ENCODE measurements at regions of chr19 and their contacts with region 1.

Region 1: GRCh38 chr19:13093407-13094105 is 9.1 kb downstream of the LYL1 start:
- DNase-seq: peak; percentile 86
- H3K4me3 ChIP-seq: no peak overlapping the region
- H3K27ac ChIP-seq: no peak overlapping the region
- H3K4me1 ChIP-seq: peaks cover 32% of the 10 kb centered on the region
- H3K27me3 ChIP-seq: no peaks in the 10 kb centered on the region
- CTCF ChIP-seq: peak; percentile 87 to 90
- POLR2A ChIP-seq: no peak

Region 2: DNA sequence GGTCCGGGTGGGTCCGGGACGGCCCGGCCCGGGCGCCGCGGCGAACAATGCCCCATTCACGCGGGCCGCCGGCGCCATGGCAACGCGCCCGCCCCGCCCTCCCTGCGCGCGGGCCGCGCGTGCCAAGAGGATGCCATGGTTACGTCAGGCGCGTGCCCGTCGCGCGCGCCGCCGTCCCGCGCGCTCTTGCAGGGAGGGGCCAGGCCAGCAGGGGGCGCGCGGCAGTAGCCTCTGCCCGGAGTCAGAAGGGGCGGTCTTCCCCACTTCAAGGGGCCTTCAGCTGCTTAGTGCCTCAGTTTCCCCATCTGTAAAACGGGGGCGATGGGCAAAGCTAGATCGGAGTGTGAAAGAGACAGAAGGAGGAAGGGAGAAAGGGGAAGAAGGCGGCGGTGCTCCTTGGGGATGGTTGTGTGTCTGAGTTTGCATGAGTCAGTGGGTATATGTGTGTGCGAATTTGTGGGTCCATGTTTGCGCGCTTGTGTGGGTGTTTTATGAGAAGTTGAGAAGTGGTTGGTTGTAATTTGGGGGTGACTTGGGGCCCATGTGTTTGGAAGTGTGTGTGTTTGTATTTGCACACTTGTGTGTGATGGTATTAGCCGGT is 109.9 kb before region 1 on chr19:
- CTCF ChIA-PET with region 1: interaction called, 543 read pairs
- POLR2A ChIA-PET with region 1: no interaction called
- dilution Hi-C with region 1: no loop called
- intact Hi-C with region 1: loop called (anchors 1 kb)
- DNase-seq: peak; percentile 83
- H3K4me3 ChIP-seq: peak overlapping the region in 2 of 3 experiments; percentile 23 to 35
- H3K27ac ChIP-seq: no peak overlapping the region
- H3K4me1 ChIP-seq: peaks cover 2% of the 10 kb centered on the region
- H3K27me3 ChIP-seq: no peaks in the 10 kb centered on the region
- CTCF ChIP-seq: peak; percentile 91 to 92
- POLR2A ChIP-seq: no peak

Region 3: GRCh38 chr19:13033819-13034611 is 59.5 kb before region 1 on chr19:
- CTCF ChIA-PET with region 1: interaction called, 114 read pairs
- POLR2A ChIA-PET with region 1: interaction called, 4 read pairs
- dilution Hi-C with region 1: no loop called
- intact Hi-C with region 1: loop called (anchors 5 kb)
- DNase-seq: no peak
- H3K4me3 ChIP-seq: no peak overlapping the region
- H3K27ac ChIP-seq: no peak overlapping the region
- H3K4me1 ChIP-seq: peaks cover 15% of the 10 kb centered on the region
- H3K27me3 ChIP-seq: no peaks in the 10 kb centered on the region
- CTCF ChIP-seq: peak; percentile 77 to 86
- POLR2A ChIP-seq: no peak

Region 4: DNA sequence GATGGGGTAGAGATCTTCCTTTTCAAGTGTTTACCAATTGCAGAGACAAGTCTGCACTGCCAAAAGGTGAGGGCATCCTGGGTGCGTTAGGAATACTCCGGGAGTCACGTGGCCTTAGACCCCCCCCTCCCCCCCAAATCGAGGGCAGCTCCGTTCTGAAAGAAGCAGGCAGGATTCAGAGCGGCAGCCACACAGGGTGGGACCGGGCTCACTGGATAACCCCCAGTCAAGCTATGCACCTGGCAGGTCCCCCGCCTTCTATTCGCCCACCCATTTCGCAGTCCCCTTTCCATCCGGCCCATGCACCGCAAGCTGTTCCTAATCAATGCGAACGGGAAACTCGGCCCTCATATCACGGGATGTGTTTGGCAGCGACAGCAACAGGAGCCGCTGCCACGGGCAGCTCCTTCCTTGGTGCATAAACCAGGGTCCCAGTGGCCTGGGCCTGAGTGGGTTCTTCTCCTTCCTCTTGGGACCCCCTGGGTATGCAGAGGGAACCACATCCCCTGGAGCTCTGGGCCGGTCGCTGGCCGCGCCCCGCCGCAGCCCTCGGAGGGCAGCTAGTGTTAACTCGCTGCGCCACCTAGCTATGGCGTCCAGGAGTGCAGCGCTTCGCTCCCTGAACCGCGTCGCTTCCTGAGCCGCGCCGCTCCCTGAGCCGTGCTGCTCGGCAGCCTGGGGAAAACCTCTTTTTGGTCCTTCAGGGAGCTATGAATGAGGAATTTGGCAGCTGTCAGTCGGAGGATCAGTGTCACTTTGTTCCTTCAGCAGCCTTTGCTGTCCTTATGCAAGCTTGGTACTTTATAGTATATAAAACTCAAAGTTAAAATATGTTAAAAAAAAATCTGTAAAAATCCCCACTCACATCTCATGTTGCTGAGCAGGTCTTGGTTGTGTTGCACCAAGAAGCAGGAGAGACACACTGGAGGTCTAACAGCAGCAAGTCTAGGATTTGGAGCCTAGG is 32.3 kb before region 1 on chr19:
- CTCF ChIA-PET with region 1: interaction called, 65 read pairs
- POLR2A ChIA-PET with region 1: interaction called, 3 read pairs
- dilution Hi-C with region 1: no loop called
- intact Hi-C with region 1: loop called (anchors 1 kb)
- DNase-seq: peak; percentile 79
- H3K4me3 ChIP-seq: peak overlapping the region; percentile 23 to 43 (median 33)
- H3K27ac ChIP-seq: no peak overlapping the region
- H3K4me1 ChIP-seq: peaks cover 24% of the 10 kb centered on the region
- H3K27me3 ChIP-seq: no peaks in the 10 kb centered on the region
- CTCF ChIP-seq: peak; percentile 98
- POLR2A ChIP-seq: no peak

Region 5: GRCh38 chr19:13082192-13083007 is 11.2 kb before region 1 on chr19:
- CTCF ChIA-PET with region 1: interaction called, 21 read pairs
- POLR2A ChIA-PET with region 1: no interaction called
- dilution Hi-C with region 1: no loop called
- intact Hi-C with region 1: no loop called
- DNase-seq: peak; percentile 57
- H3K4me3 ChIP-seq: no peak overlapping the region
- H3K27ac ChIP-seq: no peak overlapping the region
- H3K4me1 ChIP-seq: peaks cover 4% of the 10 kb centered on the region
- H3K27me3 ChIP-seq: no peaks in the 10 kb centered on the region
- CTCF ChIP-seq: peak; percentile 39 to 60
- POLR2A ChIP-seq: no peak

Region 6: DNA sequence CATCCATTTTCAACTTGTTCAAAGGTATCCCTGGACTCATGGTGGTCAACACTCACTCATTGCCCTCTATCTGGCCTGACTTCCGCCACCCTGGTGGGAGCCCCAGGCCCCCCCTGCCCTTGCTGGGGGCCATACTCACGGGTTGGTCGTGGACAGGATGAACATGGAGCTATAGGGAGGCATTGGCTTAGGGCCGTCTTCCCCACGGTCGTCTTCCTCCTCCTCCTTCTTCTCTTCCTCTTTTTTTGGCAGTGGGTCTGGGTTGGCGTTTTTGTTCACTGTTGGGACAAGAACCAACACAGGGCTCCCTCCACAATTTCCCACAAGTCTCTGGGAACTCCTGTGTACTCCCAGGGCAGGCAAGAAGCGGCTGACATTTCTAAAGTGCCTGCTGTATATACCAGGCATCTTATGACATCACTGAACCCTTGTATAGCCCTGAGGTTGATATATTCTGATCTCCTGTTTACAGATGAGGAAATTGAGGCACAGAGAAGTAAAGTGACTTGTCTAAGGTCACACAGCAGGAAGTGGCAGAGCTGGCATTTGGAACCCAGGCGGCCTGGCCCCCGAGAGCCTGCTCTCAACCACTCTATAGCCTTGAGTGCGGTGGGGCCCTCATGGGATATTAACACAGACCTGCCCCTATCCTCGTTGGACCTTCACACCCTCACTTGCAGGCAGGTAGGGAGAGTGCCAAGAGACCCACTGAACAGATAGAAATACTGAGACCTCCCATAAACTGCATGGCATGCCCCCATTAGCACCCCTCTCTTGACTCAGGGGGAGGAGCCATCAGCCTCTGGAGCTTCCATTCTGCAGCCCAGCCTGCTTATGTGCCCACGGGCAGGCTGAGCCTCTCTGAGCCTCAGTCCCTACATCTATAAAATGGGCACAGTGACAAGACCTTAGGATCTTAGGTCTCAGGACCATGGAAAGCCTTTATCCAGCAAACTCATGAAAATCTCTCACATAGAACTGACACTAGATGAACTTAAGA is 191.7 kb after region 1 on chr19:
- CTCF ChIA-PET with region 1: no interaction called
- POLR2A ChIA-PET with region 1: no interaction called
- dilution Hi-C with region 1: no loop called
- intact Hi-C with region 1: no loop called
- DNase-seq: no peak
- H3K4me3 ChIP-seq: no peak overlapping the region
- H3K27ac ChIP-seq: no peak overlapping the region
- H3K4me1 ChIP-seq: no peaks in the 10 kb centered on the region
- H3K27me3 ChIP-seq: no peaks in the 10 kb centered on the region
- CTCF ChIP-seq: no peak
- POLR2A ChIP-seq: no peak

Region 7: DNA sequence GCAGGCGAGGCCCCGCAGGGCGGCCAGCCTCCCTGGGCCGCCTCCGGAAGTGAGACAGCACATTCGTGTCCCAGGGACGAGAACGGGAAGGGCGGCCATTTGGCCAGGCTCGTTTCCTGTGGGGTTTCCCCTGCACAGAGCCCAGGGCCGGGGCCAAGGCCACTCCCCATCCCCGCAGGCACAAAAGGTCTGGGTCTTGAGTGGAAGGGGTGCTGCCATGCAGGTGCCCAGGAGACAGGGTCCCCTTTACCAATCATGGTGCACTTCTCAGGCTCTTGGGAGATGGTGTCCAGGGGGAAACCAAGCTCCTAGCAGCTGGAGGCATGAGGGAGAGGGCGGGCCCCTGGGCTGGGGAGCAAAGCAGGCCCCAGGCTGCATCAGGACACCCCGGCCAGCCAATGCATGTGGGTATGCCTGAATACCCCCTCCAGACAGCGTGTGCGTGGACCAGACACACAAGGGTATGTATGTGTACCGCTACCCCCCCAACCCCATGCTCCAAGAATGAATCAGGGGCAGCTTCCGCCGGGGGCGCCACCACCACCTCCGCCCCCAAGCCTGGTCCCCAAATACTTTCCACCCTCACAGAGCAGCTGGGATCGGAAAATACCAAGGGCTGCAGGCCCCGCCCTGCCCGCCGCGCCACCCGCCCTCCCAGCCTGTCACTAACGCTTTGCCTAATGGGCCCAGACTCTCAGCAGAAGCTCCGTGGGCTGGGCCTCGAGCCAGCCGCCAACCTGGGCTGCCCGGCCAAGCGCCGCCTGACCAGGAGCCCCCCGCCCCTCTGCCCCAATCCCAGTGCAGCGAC is 745.8 kb after region 1 on chr19:
- CTCF ChIA-PET with region 1: no interaction called
- POLR2A ChIA-PET with region 1: no interaction called
- dilution Hi-C with region 1: no loop called
- intact Hi-C with region 1: loop called (anchors 2 kb)
- DNase-seq: peak; percentile 87
- H3K4me3 ChIP-seq: peak overlapping the region in 2 of 3 experiments; percentile 79 to 82
- H3K27ac ChIP-seq: peak overlapping the region; percentile 94
- H3K4me1 ChIP-seq: peaks cover 39% of the 10 kb centered on the region
- H3K27me3 ChIP-seq: no peaks in the 10 kb centered on the region
- CTCF ChIP-seq: no peak
- POLR2A ChIP-seq: peak; percentile 77

Measured in endothelial cell of umbilical vein (primary cell).